ENCODE measurements at regions of chr14 and their contacts with region 1.

Region 1: DNA sequence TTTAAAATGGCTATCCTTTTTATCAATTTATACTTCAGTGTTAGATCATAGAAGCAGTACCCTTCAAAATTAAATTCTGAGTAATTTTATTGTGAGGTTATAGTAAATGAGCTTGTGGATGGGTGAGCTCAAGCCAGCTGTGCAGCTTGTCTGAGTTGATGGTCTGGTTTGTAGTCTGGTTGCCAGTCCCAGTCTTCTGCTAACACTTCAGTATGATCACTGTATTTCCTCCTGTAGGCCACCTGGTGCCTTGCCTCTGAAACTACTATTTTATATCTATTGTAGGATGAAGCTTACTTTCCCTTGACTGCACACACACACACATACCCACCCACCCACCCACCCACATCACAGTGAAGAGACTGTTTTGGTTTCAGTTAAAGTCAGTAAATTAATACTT is 496.4 kb downstream of the PCNX1 start:
- DNase-seq: no peak
- ATAC-seq: no peak
- H3K4me3 ChIP-seq: no peak overlapping the region
- H3K27ac ChIP-seq: no peak overlapping the region
- H3K4me1 ChIP-seq: peaks cover 1 to 4% of the 10 kb centered on the region in 2 donors
- H3K27me3 ChIP-seq: no peaks in the 10 kb centered on the region

Region 2: DNA sequence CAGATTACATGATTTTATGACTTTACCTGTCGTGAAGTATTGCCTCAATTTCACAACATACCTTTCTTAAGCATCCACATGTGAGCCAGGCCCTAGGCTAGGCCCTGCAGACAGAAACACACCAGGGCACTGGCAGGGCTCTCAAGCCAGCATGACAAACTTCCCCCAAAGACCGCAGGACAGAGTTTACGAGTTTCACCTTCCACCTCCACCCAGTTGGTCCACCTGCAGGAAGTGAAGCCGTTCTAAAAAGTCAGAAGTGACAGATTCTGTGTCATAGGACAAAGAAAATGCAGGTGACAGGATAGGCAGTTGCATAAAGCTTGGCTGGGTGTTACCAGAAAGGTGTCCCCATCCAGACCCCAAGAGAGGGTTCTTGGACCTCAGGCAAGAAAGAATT is 114.1 kb before region 1 on chr14:
- intact Hi-C with region 1: no loop called
- DNase-seq: no peak
- ATAC-seq: no peak
- H3K4me3 ChIP-seq: no peak overlapping the region
- H3K27ac ChIP-seq: no peak overlapping the region
- H3K4me1 ChIP-seq: no peaks in the 10 kb centered on the region
- H3K27me3 ChIP-seq: no peaks in the 10 kb centered on the region

Region 3: DNA sequence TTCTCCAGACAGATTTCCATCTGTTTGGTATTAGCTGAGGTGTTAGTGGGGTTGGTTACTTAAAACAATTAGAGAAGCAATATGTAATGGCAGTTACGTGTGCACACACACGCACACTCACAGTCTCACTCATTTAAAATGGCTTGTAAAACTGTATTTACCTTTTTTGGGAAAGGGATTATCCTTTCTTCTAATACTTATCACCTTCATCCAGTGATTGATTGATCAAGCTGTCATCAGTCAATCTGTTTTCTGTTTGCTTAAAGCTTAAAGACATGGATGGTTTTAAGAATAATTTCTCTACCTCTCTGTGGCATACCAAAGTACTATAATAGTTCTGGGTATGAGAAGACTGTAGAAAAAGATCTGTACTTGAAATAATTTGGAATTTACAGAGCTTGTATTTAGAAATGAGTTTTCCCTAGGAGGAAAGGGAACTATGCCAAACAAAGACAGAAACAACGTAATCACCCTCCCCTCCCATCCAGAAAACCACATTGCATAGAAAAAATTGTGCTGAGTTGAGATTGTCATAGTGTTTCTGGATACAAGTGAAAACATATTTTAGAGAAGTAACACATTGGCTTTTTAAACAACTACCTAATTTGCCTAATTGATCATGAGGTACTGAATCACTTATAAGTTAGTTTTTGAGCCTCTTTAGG is 40.6 kb before region 1 on chr14:
- intact Hi-C with region 1: loop called in 1 of 2 experiments (anchors 5 kb)
- DNase-seq: no peak
- ATAC-seq: peak; percentile 65
- H3K4me3 ChIP-seq: no peak overlapping the region
- H3K27ac ChIP-seq: no peak overlapping the region
- H3K4me1 ChIP-seq: peaks cover 0 to 1% of the 10 kb centered on the region in 2 donors
- H3K27me3 ChIP-seq: no peaks in the 10 kb centered on the region

Region 4: GRCh38 chr14:71441126-71441525 is 37.5 kb after region 1 on chr14:
- intact Hi-C with region 1: loop called in 1 of 2 experiments (anchors 5 kb)
- DNase-seq: no peak
- ATAC-seq: peak; percentile 76
- H3K4me3 ChIP-seq: no peak overlapping the region
- H3K27ac ChIP-seq: peak overlapping the region in 1 of 2 donors; percentile 59
- H3K4me1 ChIP-seq: peaks cover 0 to 2% of the 10 kb centered on the region in 2 donors
- H3K27me3 ChIP-seq: no peaks in the 10 kb centered on the region